Activated T-helper 1 cell treated with anti-CD3 and anti-CD28 coated beads, Interleukin-12 subunit alpha, Interleukin-12 subunit beta, Interleukin-2, Interleukin-4 antibody, amounts not matched to agents 30 ng/mL and 10 ng/mL and 1 ng/mL, durations not matched to agents 14 hours and 24 hours and 36 hours (primary cell): ENCODE measurements at regions of chr19 and their contacts with region 1.

Region 1: GRCh38 chr19:16371540-16371986 is 46.9 kb downstream of the KLF2 start:
- DNase-seq: peak; percentile 89
- H3K4me3 Mint-ChIP-seq: peak overlapping the region; percentile 64
- H3K27ac Mint-ChIP-seq: peak overlapping the region; percentile 83
- H3K4me1 Mint-ChIP-seq: peaks cover 33% of the 10 kb centered on the region
- H3K27me3 Mint-ChIP-seq: peaks cover 7% of the 10 kb centered on the region

Region 2: DNA sequence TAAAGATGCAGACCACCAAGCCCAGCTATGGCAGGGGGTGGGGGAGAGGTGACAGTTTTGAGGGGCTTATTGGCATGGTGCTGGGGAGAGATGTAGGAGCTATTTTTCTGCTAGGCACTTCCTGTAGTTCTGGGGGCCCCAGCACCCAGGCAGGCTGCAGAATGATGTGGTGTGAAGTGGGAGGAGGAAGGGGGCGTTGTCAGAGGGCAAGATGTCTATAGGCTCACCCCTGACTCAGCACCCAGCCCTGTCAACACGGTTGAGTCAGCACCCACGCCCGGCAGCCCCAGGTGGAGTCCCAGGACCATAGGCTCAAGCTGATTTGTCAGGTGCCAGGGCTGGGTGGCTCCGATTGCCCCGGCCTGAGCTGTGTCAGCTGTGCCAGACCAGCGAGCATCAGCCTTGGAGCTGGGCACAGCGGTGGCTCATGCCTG is 41.2 kb before region 1 on chr19:
- intact Hi-C with region 1: loop called (anchors 1 kb)
- DNase-seq: peak; percentile 89
- H3K4me3 Mint-ChIP-seq: peak overlapping the region; percentile 93
- H3K27ac Mint-ChIP-seq: peak overlapping the region; percentile 79
- H3K4me1 Mint-ChIP-seq: peaks cover 67% of the 10 kb centered on the region
- H3K27me3 Mint-ChIP-seq: peaks cover 9% of the 10 kb centered on the region

Region 3: GRCh38 chr19:16338470-16339360 is 32.8 kb before region 1 on chr19:
- intact Hi-C with region 1: loop called (anchors 1 kb)
- DNase-seq: peak; percentile 69
- H3K4me3 Mint-ChIP-seq: peak overlapping the region; percentile 76
- H3K27ac Mint-ChIP-seq: peak overlapping the region; percentile 95
- H3K4me1 Mint-ChIP-seq: peaks cover 65% of the 10 kb centered on the region
- H3K27me3 Mint-ChIP-seq: peaks cover 15% of the 10 kb centered on the region

Region 4: GRCh38 chr19:16359964-16360363 is 11.6 kb before region 1 on chr19:
- intact Hi-C with region 1: loop called (anchors 1 kb)
- DNase-seq: no peak
- H3K4me3 Mint-ChIP-seq: no peak overlapping the region
- H3K27ac Mint-ChIP-seq: no peak overlapping the region
- H3K4me1 Mint-ChIP-seq: peaks cover 85% of the 10 kb centered on the region
- H3K27me3 Mint-ChIP-seq: peaks cover 7% of the 10 kb centered on the region

Region 5: GRCh38 chr19:16382775-16383543 is 11.4 kb after region 1 on chr19:
- intact Hi-C with region 1: loop called (anchors 1 kb)
- DNase-seq: peak; percentile 64
- H3K4me3 Mint-ChIP-seq: peak overlapping the region; percentile 62
- H3K27ac Mint-ChIP-seq: no peak overlapping the region
- H3K4me1 Mint-ChIP-seq: peaks cover 40% of the 10 kb centered on the region
- H3K27me3 Mint-ChIP-seq: no peaks in the 10 kb centered on the region

Region 6: DNA sequence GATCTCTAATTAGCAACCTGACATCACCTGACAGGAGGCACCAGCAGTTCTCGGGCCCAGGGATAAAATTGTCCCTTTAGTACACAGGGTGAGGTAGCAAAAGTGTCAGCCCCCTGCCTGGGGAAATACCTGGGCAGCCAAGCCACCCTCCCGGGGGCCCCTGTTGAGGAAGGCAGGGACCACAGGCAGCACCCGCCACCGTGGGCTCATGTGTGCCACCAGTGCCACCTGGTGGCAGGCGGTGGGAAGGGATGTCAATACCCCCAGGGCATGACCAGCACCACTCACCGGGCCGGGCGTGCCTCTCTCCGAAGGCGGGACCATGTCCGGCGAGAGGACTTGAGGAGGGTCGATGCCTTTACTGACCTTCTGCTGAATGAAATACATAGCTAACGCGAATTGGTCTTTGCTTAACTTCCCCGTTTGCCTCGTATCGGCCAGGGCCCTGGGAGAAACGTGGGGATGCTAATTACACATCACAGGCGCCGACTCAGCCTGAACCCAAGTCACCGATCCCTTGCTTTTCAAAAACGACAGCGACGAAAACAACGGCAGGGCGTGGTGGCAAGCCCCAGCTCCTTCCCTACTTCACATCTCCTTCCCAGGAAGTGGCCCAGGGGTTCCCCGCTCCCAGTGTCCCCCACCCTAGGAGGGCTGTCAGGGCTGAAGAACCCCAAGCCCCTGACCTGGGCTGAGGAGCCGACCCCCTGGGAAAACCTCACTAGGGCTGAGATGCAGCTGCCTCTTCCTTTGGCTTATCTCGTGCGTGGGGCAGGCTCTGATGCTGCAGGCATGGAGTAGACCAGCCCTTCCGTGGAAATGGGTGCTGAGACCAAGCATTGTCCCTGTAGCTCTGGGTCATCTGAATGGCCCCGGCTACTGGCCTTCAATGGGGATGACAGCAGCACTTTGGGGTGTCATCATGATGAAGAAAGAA is 46.4 kb after region 1 on chr19:
- intact Hi-C with region 1: no loop called
- DNase-seq: peak; percentile 50
- H3K4me3 Mint-ChIP-seq: no peak overlapping the region
- H3K27ac Mint-ChIP-seq: peak overlapping the region; percentile 3
- H3K4me1 Mint-ChIP-seq: peaks cover 5% of the 10 kb centered on the region
- H3K27me3 Mint-ChIP-seq: no peaks in the 10 kb centered on the region